ENCODE measurements at regions of chrX and their contacts with region 1.

Region 1: DNA sequence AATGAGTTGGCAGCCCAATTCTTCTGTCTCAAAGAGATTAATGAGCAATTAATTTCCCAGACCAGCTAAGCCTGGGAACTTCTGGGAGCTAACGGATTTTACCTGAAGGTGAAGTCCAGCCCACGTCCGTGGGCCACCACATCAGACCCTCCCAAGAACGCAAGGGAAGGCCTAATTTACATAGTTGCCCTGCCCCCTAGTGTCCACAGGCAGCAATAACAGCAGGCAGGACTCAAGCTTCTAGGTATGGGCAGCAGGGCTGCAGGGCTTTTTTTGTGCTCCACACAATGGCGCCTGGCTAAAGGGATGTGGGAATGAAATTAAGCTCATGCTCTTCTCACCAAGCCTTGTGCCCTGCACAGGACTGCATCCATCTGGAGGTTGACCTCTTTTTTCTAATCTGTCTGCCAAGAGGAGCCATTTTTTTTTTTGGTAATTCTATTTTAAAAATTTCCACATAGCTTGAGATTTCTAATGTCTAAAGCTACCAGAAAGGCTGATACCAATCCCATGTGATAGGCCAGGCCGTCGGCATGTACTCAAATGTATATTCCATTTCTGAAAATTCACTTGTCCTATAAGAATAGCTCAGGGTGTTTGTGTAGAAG is 111.9 kb upstream of the TMEM164 start:
- DNase-seq: peak; percentile 68
- H3K4me3 Mint-ChIP-seq: no peak overlapping the region
- H3K27ac Mint-ChIP-seq: no peak overlapping the region
- H3K4me1 Mint-ChIP-seq: no peaks in the 10 kb centered on the region
- H3K27me3 Mint-ChIP-seq: peaks cover 70% of the 10 kb centered on the region
- CTCF ChIP-seq: peak; percentile 82

Region 2: GRCh38 chrX:109485470-109486340 is 405.3 kb before region 1 on chrX:
- CTCF ChIA-PET with region 1: interaction called, 57 read pairs
- POLR2A ChIA-PET with region 1: no interaction called
- intact Hi-C with region 1: loop called (anchors 2 kb)
- DNase-seq: peak; percentile 76
- H3K4me3 Mint-ChIP-seq: no peak overlapping the region
- H3K27ac Mint-ChIP-seq: no peak overlapping the region
- H3K4me1 Mint-ChIP-seq: no peaks in the 10 kb centered on the region
- H3K27me3 Mint-ChIP-seq: peaks cover 42% of the 10 kb centered on the region
- CTCF ChIP-seq: peak; percentile 98

Region 3: GRCh38 chrX:109709129-109709631 is 181.8 kb before region 1 on chrX:
- CTCF ChIA-PET with region 1: interaction called, 58 read pairs
- POLR2A ChIA-PET with region 1: interaction called, 4 read pairs
- intact Hi-C with region 1: loop called (anchors 1 kb)
- DNase-seq: peak; percentile 58
- H3K4me3 Mint-ChIP-seq: no peak overlapping the region
- H3K27ac Mint-ChIP-seq: peak overlapping the region; percentile 42
- H3K4me1 Mint-ChIP-seq: peaks cover 10% of the 10 kb centered on the region
- H3K27me3 Mint-ChIP-seq: peaks cover 14% of the 10 kb centered on the region
- CTCF ChIP-seq: no peak

Region 4: DNA sequence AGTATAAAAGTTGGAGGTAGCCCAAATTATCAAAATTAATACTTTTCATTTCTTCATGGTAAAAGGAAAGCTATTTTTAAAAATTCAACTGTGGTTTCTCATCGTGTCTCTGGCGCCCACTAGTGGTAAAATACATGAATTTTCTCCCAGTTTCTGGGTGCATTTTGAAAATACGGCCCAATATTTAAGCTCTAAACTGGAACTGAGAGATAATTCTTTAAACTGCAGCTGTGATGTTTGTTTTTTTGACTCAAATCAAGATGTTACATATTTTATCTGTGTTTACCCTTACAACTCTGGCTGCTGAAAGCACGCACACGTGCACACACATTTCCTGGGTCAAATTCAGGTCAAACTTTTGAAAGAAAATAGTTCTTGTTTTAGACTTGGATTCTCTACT is 34.0 kb before region 1 on chrX:
- CTCF ChIA-PET with region 1: interaction called, 25 read pairs
- POLR2A ChIA-PET with region 1: interaction called, 6 read pairs
- intact Hi-C with region 1: loop called (anchors 1 kb)
- DNase-seq: peak; percentile 60
- H3K4me3 Mint-ChIP-seq: no peak overlapping the region
- H3K27ac Mint-ChIP-seq: no peak overlapping the region
- H3K4me1 Mint-ChIP-seq: peaks cover 9% of the 10 kb centered on the region
- H3K27me3 Mint-ChIP-seq: peaks cover 26% of the 10 kb centered on the region
- CTCF ChIP-seq: peak; percentile 83

Region 5: GRCh38 chrX:109872021-109872732 is 18.8 kb before region 1 on chrX:
- CTCF ChIA-PET with region 1: interaction called, 24 read pairs
- POLR2A ChIA-PET with region 1: interaction called, 3 read pairs
- intact Hi-C with region 1: no loop called
- DNase-seq: no peak
- H3K4me3 Mint-ChIP-seq: no peak overlapping the region
- H3K27ac Mint-ChIP-seq: no peak overlapping the region
- H3K4me1 Mint-ChIP-seq: no peaks in the 10 kb centered on the region
- H3K27me3 Mint-ChIP-seq: peaks cover 56% of the 10 kb centered on the region
- CTCF ChIP-seq: no peak

Region 6: DNA sequence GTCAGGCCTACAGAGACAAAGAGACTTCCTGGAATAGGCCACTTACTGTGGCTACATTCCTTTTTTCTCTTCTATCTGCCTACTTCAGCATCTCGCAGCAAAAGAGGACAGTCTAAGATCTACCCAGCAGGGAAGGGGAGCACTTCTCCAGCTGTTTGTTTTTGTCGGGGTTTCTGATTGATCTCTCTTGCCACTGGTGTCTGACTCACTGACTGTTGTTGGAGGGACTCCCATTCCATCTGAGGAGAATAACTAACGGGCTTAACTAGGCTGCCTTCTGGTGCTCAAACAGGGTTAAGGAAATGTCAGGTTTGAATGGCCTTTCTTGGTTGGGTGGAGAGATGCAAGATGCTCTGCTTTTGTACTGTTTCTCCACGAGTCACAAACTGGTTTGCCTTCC is 11.7 kb after region 1 on chrX:
- CTCF ChIA-PET with region 1: interaction called, 12 read pairs
- POLR2A ChIA-PET with region 1: no interaction called
- intact Hi-C with region 1: no loop called
- DNase-seq: peak; percentile 22
- H3K4me3 Mint-ChIP-seq: no peak overlapping the region
- H3K27ac Mint-ChIP-seq: no peak overlapping the region
- H3K4me1 Mint-ChIP-seq: no peaks in the 10 kb centered on the region
- H3K27me3 Mint-ChIP-seq: peaks cover 90% of the 10 kb centered on the region
- CTCF ChIP-seq: no peak

Measured in MCF 10A (cell line).